ENCODE measurements at regions of chrX and their contacts with region 1.

Region 1: GRCh38 chrX:10111364-10112148 is 45.2 kb upstream of the CLCN4 start:
- DNase-seq: peak; percentile 59
- H3K4me3 Mint-ChIP-seq: peak overlapping the region; percentile 64
- H3K27ac Mint-ChIP-seq: peak overlapping the region; percentile 91
- H3K4me1 Mint-ChIP-seq: peaks cover 56% of the 10 kb centered on the region
- H3K27me3 Mint-ChIP-seq: no peaks in the 10 kb centered on the region

Region 2: GRCh38 chrX:9530848-9531274 is 580.7 kb before region 1 on chrX:
- CTCF ChIA-PET with region 1: no interaction called
- intact Hi-C with region 1: no loop called
- DNase-seq: peak; percentile 69
- H3K4me3 Mint-ChIP-seq: peak overlapping the region; percentile 61
- H3K27ac Mint-ChIP-seq: no peak overlapping the region
- H3K4me1 Mint-ChIP-seq: peaks cover 49% of the 10 kb centered on the region
- H3K27me3 Mint-ChIP-seq: no peaks in the 10 kb centered on the region

Region 3: DNA sequence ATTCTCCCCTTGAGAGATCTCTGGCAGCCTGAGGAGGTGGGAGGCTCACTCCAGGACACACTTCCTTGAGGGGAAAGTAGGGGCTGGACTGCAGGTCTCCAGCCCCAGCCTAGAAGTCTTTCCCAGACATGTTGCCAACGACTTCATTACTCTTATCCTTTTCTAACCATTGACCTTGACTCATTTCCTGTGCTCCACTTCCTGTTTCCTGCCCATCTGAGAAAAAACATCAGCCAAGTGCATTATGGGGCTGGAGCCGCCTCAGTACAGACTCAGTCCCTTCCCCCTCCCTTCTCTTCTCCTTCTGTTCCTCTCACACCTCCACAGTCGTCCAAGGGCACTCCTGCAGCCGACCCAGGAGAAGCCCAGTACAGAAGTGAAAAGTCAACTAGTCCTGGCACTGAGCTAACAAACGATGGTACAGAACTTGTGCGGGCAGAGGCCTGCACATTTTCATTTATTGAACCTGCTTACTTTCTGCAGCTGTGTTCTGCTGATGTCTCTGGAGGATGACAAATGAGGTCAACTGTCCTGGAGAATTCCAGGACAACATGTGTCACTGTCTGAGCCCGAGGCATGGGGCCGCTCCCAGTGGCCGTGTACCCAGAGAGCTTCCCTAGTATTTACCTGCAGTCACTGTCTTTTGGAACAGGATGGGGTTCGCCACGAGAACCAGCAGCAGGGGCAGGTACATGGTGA is 366.0 kb before region 1 on chrX:
- CTCF ChIA-PET with region 1: no interaction called
- intact Hi-C with region 1: no loop called
- DNase-seq: peak; percentile 9
- H3K4me3 Mint-ChIP-seq: no peak overlapping the region
- H3K27ac Mint-ChIP-seq: peak overlapping the region; percentile 46
- H3K4me1 Mint-ChIP-seq: peaks cover 16% of the 10 kb centered on the region
- H3K27me3 Mint-ChIP-seq: no peaks in the 10 kb centered on the region

Region 4: GRCh38 chrX:10083809-10084208 is 27.7 kb before region 1 on chrX:
- CTCF ChIA-PET with region 1: interaction called, 4 read pairs
- intact Hi-C with region 1: loop called (anchors 1 kb)
- DNase-seq: no peak
- H3K4me3 Mint-ChIP-seq: no peak overlapping the region
- H3K27ac Mint-ChIP-seq: no peak overlapping the region
- H3K4me1 Mint-ChIP-seq: peaks cover 34% of the 10 kb centered on the region
- H3K27me3 Mint-ChIP-seq: no peaks in the 10 kb centered on the region

Region 5: GRCh38 chrX:10089378-10089812 is 22.2 kb before region 1 on chrX:
- CTCF ChIA-PET with region 1: interaction called, 12 read pairs
- intact Hi-C with region 1: loop called (anchors 1 kb)
- DNase-seq: no peak
- H3K4me3 Mint-ChIP-seq: no peak overlapping the region
- H3K27ac Mint-ChIP-seq: no peak overlapping the region
- H3K4me1 Mint-ChIP-seq: peaks cover 20% of the 10 kb centered on the region
- H3K27me3 Mint-ChIP-seq: no peaks in the 10 kb centered on the region

Measured in activated naive CD4-positive, alpha-beta T cell treated with anti-CD3 and anti-CD28 coated beads for 36 hours (primary cell).